MCF 10A (cell line): ENCODE measurements at regions of chr20 and their contacts with region 1.

Region 1: GRCh38 chr20:43691928-43692524 is 25.1 kb downstream of the MYBL2 start:
- DNase-seq: peak; percentile 65
- H3K4me3 Mint-ChIP-seq: no peak overlapping the region
- H3K27ac Mint-ChIP-seq: no peak overlapping the region
- H3K4me1 Mint-ChIP-seq: no peaks in the 10 kb centered on the region
- H3K27me3 Mint-ChIP-seq: no peaks in the 10 kb centered on the region
- CTCF ChIP-seq: peak; percentile 76

Region 2: GRCh38 chr20:43448748-43449535 is 243.1 kb before region 1 on chr20:
- CTCF ChIA-PET with region 1: interaction called, 17 read pairs
- POLR2A ChIA-PET with region 1: no interaction called
- intact Hi-C with region 1: loop called (anchors 1 kb)
- DNase-seq: peak; percentile 56
- H3K4me3 Mint-ChIP-seq: no peak overlapping the region
- H3K27ac Mint-ChIP-seq: no peak overlapping the region
- H3K4me1 Mint-ChIP-seq: no peaks in the 10 kb centered on the region
- H3K27me3 Mint-ChIP-seq: peaks cover 9% of the 10 kb centered on the region
- CTCF ChIP-seq: peak; percentile 82

Region 3: DNA sequence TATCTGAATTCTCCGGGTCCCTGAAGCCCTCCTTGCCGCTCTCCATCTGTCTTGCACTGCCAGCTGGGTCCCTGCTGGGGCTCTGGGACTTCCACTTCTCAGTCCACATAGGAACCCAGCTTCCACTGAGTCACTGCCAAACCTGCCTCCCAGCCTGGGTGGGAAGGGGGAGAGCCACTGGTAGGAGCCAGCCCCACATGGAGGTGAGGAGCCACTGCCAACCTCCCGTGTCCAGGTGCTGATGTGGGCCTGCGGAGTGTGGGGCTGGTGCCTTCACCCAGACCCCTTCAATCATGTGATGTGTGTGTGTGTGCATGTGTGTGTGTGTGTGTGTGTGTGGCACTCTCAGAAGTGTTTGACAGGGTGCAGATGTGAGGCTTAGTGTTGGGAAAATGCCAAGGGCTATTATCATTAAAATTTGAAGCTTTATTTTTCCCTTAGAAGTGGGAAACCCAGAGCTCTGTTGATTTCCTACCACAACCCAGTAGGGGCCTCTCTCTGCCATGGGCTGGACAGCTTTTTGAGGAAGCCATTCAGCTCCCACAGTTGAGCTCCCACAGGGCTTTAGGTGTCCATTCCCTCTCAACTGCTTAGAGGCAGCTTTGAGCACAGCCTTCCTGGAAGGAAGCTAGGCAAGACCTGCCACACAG is 142.5 kb before region 1 on chr20:
- CTCF ChIA-PET with region 1: interaction called, 10 read pairs
- POLR2A ChIA-PET with region 1: no interaction called
- intact Hi-C with region 1: no loop called
- DNase-seq: no peak
- H3K4me3 Mint-ChIP-seq: no peak overlapping the region
- H3K27ac Mint-ChIP-seq: no peak overlapping the region
- H3K4me1 Mint-ChIP-seq: no peaks in the 10 kb centered on the region
- H3K27me3 Mint-ChIP-seq: no peaks in the 10 kb centered on the region
- CTCF ChIP-seq: no peak

Region 4: GRCh38 chr20:43681468-43681942 is 10.5 kb before region 1 on chr20:
- CTCF ChIA-PET with region 1: interaction called, 13 read pairs
- POLR2A ChIA-PET with region 1: interaction called, 3 read pairs
- intact Hi-C with region 1: no loop called
- DNase-seq: no peak
- H3K4me3 Mint-ChIP-seq: no peak overlapping the region
- H3K27ac Mint-ChIP-seq: no peak overlapping the region
- H3K4me1 Mint-ChIP-seq: no peaks in the 10 kb centered on the region
- H3K27me3 Mint-ChIP-seq: no peaks in the 10 kb centered on the region
- CTCF ChIP-seq: no peak

Region 5: GRCh38 chr20:43702502-43702901 is 10.5 kb after region 1 on chr20:
- CTCF ChIA-PET with region 1: interaction called, 14 read pairs
- POLR2A ChIA-PET with region 1: no interaction called
- intact Hi-C with region 1: no loop called
- DNase-seq: no peak
- H3K4me3 Mint-ChIP-seq: no peak overlapping the region
- H3K27ac Mint-ChIP-seq: peak overlapping the region; percentile 67
- H3K4me1 Mint-ChIP-seq: peaks cover 10% of the 10 kb centered on the region
- H3K27me3 Mint-ChIP-seq: no peaks in the 10 kb centered on the region
- CTCF ChIP-seq: no peak